ENCODE measurements at regions of chr6 and their contacts with region 1.

Region 1: DNA sequence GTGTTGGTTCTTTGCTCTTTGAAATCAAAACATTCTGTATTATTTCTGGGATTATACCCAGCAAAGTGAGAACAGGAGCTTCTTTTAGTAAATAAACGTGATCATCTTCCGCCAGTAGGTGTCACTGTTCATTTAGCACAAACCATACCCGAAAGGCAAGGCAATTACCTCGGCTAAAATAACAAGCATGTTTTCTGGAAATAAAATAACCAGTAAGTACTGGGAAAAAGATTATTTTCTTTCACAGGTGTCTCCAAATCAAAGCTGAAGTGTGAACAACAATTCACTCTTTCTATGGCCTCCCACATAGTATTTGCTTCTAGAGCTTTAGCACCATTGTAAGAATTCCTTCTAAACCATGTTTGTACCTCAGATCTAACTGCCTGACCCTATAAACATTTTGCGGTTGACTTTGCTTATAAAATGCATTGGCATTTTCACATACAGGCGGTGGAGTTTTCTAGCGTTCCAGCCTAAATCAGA is 144.6 kb upstream of the AGPAT4 start:
- DNase-seq: peak; percentile 76
- H3K4me3 ChIP-seq: no peak overlapping the region
- H3K27ac ChIP-seq: peak overlapping the region; percentile 87
- H3K27me3 ChIP-seq: no peaks in the 10 kb centered on the region
- CTCF ChIP-seq: peak; percentile 71

Region 2: DNA sequence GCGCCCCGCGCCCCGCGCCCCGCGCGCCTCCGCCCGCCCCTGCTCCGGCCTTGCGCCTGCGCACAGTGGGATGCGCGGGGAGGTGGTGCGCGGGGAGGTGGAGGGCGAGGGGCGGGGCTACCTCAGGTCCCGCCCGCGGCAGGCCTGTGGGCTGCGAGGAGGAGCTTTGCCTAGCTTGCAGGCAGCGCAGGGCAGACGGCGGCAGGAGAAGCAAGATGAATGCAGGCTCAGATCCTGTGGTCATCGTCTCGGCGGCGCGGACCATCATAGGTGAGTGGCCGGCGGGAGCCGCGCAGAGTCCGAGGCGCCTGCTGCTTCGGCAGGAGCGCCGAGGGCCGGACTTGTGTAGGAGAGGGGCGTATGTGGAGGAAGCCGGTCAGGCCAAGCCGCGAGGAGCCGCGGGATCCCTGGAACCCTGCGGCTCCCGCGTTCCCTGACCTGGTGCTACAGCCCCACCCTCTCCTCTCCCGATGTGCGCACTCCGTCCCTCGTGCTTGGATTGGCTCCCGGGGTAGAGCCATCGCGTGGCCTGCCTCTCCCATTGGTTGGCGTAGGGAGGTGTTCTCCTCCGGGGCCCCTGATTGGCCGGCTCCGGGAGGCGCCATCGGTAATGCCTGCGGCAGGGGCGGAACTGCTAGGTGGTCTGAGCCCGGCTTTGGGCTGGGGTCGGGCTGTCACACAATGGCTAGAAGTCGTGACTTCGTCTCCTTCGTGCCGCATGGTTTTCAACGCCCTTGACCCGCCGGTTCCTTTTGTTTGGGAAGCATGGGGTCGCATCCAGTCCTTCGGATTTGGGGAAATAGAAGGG is 1656.4 kb before region 1 on chr6 and contains the start of gene ACAT2:
- CTCF ChIA-PET with region 1: no interaction called
- POLR2A ChIA-PET with region 1: no interaction called
- DNase-seq: peak; percentile 84
- H3K4me3 ChIP-seq: peak within 1 kb of the TSS; percentile 86
- H3K27ac ChIP-seq: peak within 1 kb of the TSS; percentile 97
- H3K27me3 ChIP-seq: no peaks in the 10 kb centered on the region
- CTCF ChIP-seq: no peak
- polyA plus RNA-seq, gene ACAT2: 36.9 and 39.9 TPM in 2 replicates

Region 3: DNA sequence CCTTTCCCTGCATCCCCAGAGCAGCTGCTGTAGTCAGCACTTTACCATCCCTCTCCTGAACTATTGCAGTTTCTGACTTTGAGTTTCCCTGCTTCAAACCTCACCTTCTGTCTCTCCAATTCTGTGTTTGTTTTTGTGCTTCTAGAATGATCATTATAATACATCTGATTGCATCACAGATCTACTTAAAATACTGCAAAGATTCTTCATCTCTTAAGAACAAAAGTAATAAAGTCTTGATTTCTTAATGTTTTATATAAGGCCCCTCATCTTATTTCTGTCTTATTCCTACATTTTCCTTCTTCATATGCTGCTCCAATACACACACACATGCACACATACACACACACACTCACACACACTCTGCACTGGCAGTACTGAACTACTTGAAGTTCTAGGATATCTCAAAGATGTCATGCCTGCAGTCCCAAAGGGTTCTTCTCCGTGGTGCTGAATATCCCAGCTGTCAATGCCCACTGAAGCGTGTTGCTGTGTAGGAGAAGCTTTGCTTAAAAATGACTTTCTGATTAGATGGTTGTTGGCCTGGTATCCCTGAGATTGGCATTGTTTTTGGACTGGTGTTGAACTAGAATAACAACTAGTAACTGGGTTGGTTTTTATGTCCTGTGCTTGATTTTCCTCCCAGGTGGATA is 329.7 kb before region 1 on chr6:
- CTCF ChIA-PET with region 1: no interaction called
- POLR2A ChIA-PET with region 1: no interaction called
- DNase-seq: no peak
- H3K4me3 ChIP-seq: no peak overlapping the region
- H3K27ac ChIP-seq: no peak overlapping the region
- H3K27me3 ChIP-seq: no peaks in the 10 kb centered on the region
- CTCF ChIP-seq: no peak

Region 4: DNA sequence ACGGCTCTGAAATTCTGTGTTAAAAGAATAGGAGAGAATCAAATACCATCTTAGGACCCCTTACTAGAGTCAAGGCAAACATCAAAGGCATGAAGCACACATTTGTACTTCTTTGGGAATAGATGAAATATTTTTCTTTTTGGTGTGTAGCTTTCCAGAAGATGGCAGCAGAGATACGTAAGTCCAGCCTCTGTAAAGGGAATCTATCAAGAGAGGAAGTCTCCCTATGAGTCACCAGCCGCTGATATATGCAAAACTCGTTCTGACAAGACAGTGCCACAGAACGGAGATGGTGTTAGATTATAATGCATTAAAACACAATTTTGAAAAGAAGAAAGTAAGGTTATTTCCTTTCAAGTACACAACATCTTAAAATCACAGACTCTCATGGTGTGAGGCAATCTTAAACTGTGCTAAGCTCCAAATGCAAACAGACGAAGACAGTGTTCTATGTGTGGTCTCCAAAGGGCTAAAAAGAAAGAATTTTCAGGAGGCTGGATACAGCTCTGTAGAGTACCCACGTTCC is 24.6 kb before region 1 on chr6:
- CTCF ChIA-PET with region 1: interaction called, 52 read pairs
- POLR2A ChIA-PET with region 1: no interaction called
- DNase-seq: no peak
- H3K4me3 ChIP-seq: no peak overlapping the region; the same call in 1 of the 2 replicates
- H3K27ac ChIP-seq: no peak overlapping the region
- H3K27me3 ChIP-seq: peaks cover 2% of the 10 kb centered on the region
- CTCF ChIP-seq: peak; percentile 71

Region 5: DNA sequence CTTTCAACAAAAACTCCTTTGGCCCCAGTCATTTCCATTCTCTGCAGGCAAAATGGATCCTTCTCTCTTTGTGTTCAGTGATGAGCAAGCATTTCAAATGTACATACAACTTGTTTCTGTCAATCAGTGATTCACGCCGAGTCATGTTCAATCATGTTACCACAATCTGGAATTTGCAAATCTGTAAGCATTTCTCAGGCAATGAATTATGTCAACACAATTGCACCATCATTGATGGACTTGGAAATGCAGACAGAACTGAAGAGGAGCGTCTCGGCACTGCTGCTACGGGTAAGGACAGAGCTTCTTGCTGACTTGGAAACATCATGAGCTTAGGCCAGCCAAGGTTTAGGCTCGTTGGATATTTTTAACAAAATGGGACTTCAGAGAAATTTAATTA is 11.9 kb before region 1 on chr6:
- CTCF ChIA-PET with region 1: interaction called, 51 read pairs
- POLR2A ChIA-PET with region 1: interaction called, 3 read pairs
- DNase-seq: peak; percentile 52
- H3K4me3 ChIP-seq: no peak overlapping the region
- H3K27ac ChIP-seq: peak overlapping the region; percentile 42
- H3K27me3 ChIP-seq: no peaks in the 10 kb centered on the region
- CTCF ChIP-seq: no peak

Region 6: GRCh38 chr6:161439093-161439492 is 20.6 kb after region 1 on chr6:
- CTCF ChIA-PET with region 1: interaction called, 68 read pairs
- POLR2A ChIA-PET with region 1: interaction called, 11 read pairs
- DNase-seq: peak; percentile 63
- H3K4me3 ChIP-seq: no peak overlapping the region
- H3K27ac ChIP-seq: peak overlapping the region; percentile 59
- H3K27me3 ChIP-seq: no peaks in the 10 kb centered on the region
- CTCF ChIP-seq: no peak

Region 7: GRCh38 chr6:161486361-161487216 is 68.1 kb after region 1 on chr6:
- CTCF ChIA-PET with region 1: interaction called, 11 read pairs
- POLR2A ChIA-PET with region 1: no interaction called
- DNase-seq: no peak
- H3K4me3 ChIP-seq: no peak overlapping the region
- H3K27ac ChIP-seq: no peak overlapping the region
- H3K27me3 ChIP-seq: no peaks in the 10 kb centered on the region
- CTCF ChIP-seq: no peak

Region 8: DNA sequence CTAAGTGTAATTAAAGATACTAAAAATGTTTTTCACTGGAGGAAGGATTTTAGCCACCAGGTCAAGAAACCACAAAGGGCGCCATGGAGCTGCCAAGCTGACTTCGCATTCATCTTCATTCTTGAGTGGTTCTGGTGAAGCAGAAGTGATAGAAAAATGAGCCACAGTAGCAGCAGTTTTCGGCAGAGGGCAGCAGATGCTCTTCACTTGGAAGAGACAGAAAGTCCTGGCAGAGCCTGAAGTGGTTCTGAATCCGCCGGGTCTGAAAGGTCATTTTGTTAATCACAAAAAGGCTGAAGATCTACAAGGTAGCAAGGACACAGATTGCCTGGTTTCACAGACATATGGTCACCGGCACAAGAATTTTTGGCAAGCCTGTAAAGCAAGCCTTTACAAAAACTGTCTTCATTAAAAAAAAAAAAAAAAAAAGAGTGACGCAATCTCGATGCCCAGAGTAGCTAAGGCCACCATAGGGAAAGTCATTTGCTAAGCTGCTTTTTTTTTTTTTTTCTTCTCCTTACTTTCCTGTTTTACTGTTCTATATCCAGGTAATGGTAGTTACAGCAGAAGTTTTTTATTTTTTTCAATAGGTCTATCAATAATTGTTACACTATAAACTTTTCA is 200.4 kb after region 1 on chr6:
- CTCF ChIA-PET with region 1: interaction called, 11 read pairs
- POLR2A ChIA-PET with region 1: no interaction called
- DNase-seq: no peak
- H3K4me3 ChIP-seq: no peak overlapping the region
- H3K27ac ChIP-seq: no peak overlapping the region
- H3K27me3 ChIP-seq: no peaks in the 10 kb centered on the region
- CTCF ChIP-seq: peak; percentile 22; the same call in 1 of the 2 replicates

Region 9: GRCh38 chr6:161736781-161737292 is 318.3 kb after region 1 on chr6:
- CTCF ChIA-PET with region 1: no interaction called
- POLR2A ChIA-PET with region 1: no interaction called
- DNase-seq: no peak
- H3K4me3 ChIP-seq: no peak overlapping the region
- H3K27ac ChIP-seq: no peak overlapping the region
- H3K27me3 ChIP-seq: no peaks in the 10 kb centered on the region
- CTCF ChIP-seq: no peak

Measured in AG04450 (cell line).